ENCODE measurements at regions of chr18 and their contacts with region 1.

Region 1: DNA sequence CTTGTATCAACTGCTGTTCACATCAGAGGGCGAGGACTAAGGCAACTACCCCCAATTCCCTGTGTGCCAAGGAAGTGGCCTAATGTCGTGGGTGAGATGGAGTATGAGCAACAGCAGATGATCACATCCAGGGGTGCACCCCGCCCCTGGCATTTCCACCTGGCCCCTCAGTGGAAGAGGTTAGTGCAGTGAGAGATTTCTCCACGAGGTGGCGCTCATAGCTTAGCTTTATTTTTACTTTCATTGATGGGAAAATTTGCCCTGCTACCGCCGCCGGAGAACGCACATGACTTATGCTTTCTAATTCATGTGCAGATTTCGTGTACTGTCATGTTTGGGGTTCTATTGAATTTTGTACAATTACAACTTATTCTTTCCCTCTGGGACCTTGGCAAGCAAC is 470.6 kb upstream of the MEX3C start:
- DNase-seq: peak; percentile 39
- H3K4me3 ChIP-seq: no peak overlapping the region
- H3K27ac ChIP-seq: no peak overlapping the region
- H3K4me1 ChIP-seq: no peaks in the 10 kb centered on the region
- H3K27me3 ChIP-seq: no peaks in the 10 kb centered on the region
- CTCF ChIP-seq: peak; percentile 70 to 79

Region 2: DNA sequence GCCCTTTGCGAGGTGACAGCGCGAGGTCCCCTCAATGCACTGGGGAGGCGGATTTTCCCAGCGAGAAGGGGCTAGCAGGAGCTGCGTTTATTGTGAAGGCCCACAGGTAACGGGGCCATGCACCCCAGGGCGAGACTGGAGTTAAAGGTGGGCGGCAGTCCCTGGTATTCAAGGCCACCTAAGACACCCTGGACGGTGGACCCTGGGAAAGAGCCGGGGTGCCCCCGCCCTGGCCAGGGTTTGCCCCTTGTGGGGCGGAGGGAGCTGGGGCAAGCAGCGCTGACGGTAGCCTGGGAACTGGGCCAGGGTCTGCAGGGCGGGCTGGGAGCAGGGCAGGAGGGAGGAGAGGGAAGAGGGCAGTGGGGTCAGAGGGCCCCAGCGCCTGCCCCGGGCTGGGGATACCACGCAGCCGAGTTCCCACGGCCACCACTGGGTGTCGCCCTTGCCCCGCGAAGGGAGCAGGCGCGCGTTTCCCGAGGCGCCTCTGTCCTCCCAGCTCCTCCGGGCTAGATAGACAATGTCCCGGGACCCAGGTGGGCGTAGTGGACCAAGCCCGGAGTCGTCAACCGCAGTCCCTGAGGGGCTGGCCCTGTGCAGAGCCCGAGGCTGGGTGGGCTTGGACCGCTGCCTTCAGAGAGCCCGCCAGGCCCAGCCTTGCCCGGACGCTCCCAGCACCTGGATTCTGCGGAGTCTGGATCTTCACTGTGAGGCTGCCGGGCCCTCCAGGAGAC is 557.9 kb before region 1 on chr18:
- CTCF ChIA-PET with region 1: no interaction called
- dilution Hi-C with region 1: no loop called
- in situ Hi-C with region 1: loop called in 1 of 2 experiments (anchors 25 kb)
- intact Hi-C with region 1: loop called (anchors 5 kb)
- DNase-seq: peak; percentile 25
- H3K4me3 ChIP-seq: peak overlapping the region in 2 of 3 experiments; percentile 40 to 46
- H3K27ac ChIP-seq: no peak overlapping the region
- H3K4me1 ChIP-seq: peaks cover 8% of the 10 kb centered on the region
- H3K27me3 ChIP-seq: no peaks in the 10 kb centered on the region
- CTCF ChIP-seq: peak; percentile 70 to 97

Region 3: DNA sequence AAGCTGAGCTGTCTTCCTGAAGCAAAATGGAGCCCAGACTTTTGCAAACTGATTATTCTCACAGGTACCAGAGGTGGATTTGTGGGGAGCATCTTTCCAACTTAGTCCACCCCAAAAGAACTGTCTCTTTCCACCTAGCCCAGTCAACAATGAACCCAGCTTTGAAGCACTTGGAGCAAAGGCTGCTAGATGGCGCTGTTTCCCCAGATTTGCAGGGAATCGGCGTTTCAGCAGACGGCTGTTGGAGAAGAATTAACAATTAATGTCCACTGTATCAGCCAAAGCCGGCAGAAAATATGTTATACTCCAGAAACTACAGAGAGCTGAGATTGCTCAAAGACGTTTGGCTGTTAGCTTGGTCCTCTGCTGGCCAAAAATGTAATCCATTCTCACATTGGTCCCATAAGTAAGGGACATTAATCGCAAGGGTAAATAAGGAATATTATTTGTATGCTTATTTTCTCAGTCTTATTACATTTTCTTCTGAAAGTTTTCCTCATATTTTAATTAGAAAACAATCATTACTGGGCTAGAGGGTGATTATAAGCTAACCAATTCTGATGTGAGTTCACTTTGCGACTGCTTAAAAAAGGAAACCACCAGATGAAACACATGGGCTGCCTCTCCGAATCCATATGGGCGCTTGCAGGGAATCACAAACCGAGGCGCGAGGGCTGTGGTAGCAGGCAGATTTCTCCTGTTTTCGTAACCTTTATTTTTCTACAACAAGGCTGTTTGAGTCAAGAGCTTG is 46.8 kb before region 1 on chr18:
- CTCF ChIA-PET with region 1: no interaction called
- dilution Hi-C with region 1: no loop called
- in situ Hi-C with region 1: no loop called
- intact Hi-C with region 1: loop called (anchors 1 kb)
- DNase-seq: peak; percentile 48
- H3K4me3 ChIP-seq: no peak overlapping the region
- H3K27ac ChIP-seq: no peak overlapping the region
- H3K4me1 ChIP-seq: peaks cover 21% of the 10 kb centered on the region
- H3K27me3 ChIP-seq: no peaks in the 10 kb centered on the region
- CTCF ChIP-seq: peak; percentile 95 to 97

Region 4: DNA sequence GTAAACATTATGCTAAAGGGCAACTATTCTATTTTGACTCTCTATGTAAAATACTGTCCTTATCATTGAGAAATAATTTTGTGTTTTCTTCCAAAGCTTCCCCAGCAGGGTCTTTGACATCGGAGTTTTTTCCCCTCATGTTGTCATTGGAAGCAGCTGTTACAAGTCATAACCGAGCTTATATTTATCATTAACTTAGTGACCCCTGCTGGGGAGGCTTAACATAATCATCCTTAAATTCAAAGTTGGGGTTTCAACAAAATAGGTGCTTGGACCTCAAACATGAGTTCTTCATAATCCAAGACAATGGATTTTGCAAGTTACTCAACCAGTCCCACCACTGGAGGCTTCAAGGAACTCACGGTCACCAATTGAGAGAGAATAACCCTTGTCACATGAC is 1002.8 kb after region 1 on chr18:
- CTCF ChIA-PET with region 1: interaction called, 5 read pairs
- dilution Hi-C with region 1: no loop called
- in situ Hi-C with region 1: loop called in 1 of 2 experiments (anchors 25 kb)
- intact Hi-C with region 1: loop called (anchors 1 kb)
- DNase-seq: peak; percentile 1
- H3K4me3 ChIP-seq: no peak overlapping the region
- H3K27ac ChIP-seq: no peak overlapping the region
- H3K4me1 ChIP-seq: no peaks in the 10 kb centered on the region
- H3K27me3 ChIP-seq: no peaks in the 10 kb centered on the region
- CTCF ChIP-seq: peak; percentile 7 to 35

Region 5: DNA sequence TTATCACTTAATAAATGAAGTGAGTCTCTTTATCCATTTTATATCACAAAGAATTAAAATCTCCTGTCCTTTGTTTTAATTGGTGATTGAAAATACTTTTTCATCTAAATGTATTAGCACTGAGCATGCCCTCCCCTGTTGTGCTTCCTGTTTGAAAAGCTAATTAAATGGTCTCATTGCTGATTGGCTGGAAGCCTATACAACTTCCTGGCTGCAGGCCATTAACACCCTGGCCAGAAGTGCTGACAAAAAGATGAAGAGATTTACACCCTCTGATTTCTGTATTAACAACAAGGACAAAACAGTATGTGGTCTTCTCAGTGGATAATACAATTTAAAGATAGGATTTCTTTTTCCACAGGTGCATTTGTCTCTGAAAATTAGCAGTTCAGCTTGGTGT is 1219.9 kb after region 1 on chr18:
- CTCF ChIA-PET with region 1: no interaction called
- dilution Hi-C with region 1: no loop called
- in situ Hi-C with region 1: loop called in 1 of 2 experiments (anchors 25 kb)
- intact Hi-C with region 1: no loop called
- DNase-seq: no peak
- H3K4me3 ChIP-seq: no peak overlapping the region
- H3K27ac ChIP-seq: no peak overlapping the region
- H3K4me1 ChIP-seq: no peaks in the 10 kb centered on the region
- H3K27me3 ChIP-seq: no peaks in the 10 kb centered on the region
- CTCF ChIP-seq: no peak

Region 6: GRCh38 chr18:53153281-53153680 is 1485.2 kb after region 1 on chr18:
- CTCF ChIA-PET with region 1: no interaction called
- dilution Hi-C with region 1: no loop called
- in situ Hi-C with region 1: no loop called
- intact Hi-C with region 1: loop called (anchors 5 kb)
- DNase-seq: no peak
- H3K4me3 ChIP-seq: no peak overlapping the region
- H3K27ac ChIP-seq: no peak overlapping the region
- H3K4me1 ChIP-seq: no peaks in the 10 kb centered on the region
- H3K27me3 ChIP-seq: no peaks in the 10 kb centered on the region
- CTCF ChIP-seq: peak; percentile 10 to 14

Measured in mammary epithelial cell (primary cell).